ENCODE measurements at regions of chr6 and their contacts with region 1.

Region 1: GRCh38 chr6:18122124-18123093 is at the start of gene NHLRC1:
- DNase-seq: peak; percentile 97
- H3K4me3 ChIP-seq: peak within 1 kb of the TSS; percentile 63
- H3K27ac ChIP-seq: no peak within 1 kb of the TSS
- H3K4me1 ChIP-seq: peaks cover 11% of the 10 kb centered on the region
- H3K27me3 ChIP-seq: no peaks in the 10 kb centered on the region
- total RNA-seq, gene NHLRC1: 2.5 and 3.2 TPM in 2 replicates

Region 2: GRCh38 chr6:17845598-17845997 is 276.8 kb before region 1 on chr6:
- in situ Hi-C with region 1: loop called (anchors 10 kb)
- DNase-seq: no peak
- H3K4me3 ChIP-seq: no peak overlapping the region
- H3K27ac ChIP-seq: no peak overlapping the region
- H3K4me1 ChIP-seq: peaks cover 1% of the 10 kb centered on the region
- H3K27me3 ChIP-seq: no peaks in the 10 kb centered on the region

Region 3: GRCh38 chr6:17998456-17998855 is 124.0 kb before region 1 on chr6:
- in situ Hi-C with region 1: loop called (anchors 10 kb)
- DNase-seq: peak; percentile 71
- H3K4me3 ChIP-seq: no peak overlapping the region
- H3K27ac ChIP-seq: no peak overlapping the region
- H3K4me1 ChIP-seq: peaks cover 12% of the 10 kb centered on the region
- H3K27me3 ChIP-seq: no peaks in the 10 kb centered on the region